Activated T-helper 1 cell treated with anti-CD3 and anti-CD28 coated beads, Interleukin-12 subunit alpha, Interleukin-12 subunit beta, Interleukin-2, Interleukin-4 antibody, amounts not matched to agents 30 ng/mL and 10 ng/mL and 1 ng/mL, durations not matched to agents 14 hours and 24 hours and 36 hours (primary cell): ENCODE measurements at regions of chr9 and their contacts with region 1.

Region 1: GRCh38 chr9:114691046-114691955 is 9.3 kb upstream of the TEX48 start:
- DNase-seq: peak; percentile 80
- H3K4me3 Mint-ChIP-seq: peak overlapping the region; percentile 69
- H3K27ac Mint-ChIP-seq: peak overlapping the region; percentile 98
- H3K4me1 Mint-ChIP-seq: peaks cover 93% of the 10 kb centered on the region
- H3K27me3 Mint-ChIP-seq: no peaks in the 10 kb centered on the region

Region 2: DNA sequence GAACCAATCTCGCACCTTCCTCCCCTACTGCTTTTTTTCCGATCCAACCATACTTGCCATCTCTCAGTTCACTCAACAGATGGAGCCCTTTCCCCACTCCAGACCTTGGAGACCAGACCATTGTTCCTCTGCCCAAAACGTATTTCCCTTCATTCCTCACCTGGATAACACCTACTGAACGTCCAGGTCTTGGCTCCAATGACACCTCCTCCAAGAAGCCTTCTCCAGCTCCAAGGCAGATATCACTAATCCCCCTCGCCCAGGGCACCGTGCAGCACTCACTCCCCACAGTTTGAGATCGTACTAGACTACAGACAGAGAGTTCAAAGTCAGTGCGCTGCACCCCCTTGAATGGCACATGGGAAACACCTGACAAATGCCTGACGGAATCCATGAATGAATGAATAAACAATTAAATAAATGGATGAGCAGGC is 256.4 kb before region 1 on chr9:
- intact Hi-C with region 1: no loop called
- DNase-seq: no peak
- H3K4me3 Mint-ChIP-seq: no peak overlapping the region
- H3K27ac Mint-ChIP-seq: no peak overlapping the region
- H3K4me1 Mint-ChIP-seq: peaks cover 5% of the 10 kb centered on the region
- H3K27me3 Mint-ChIP-seq: peaks cover 5% of the 10 kb centered on the region

Region 3: DNA sequence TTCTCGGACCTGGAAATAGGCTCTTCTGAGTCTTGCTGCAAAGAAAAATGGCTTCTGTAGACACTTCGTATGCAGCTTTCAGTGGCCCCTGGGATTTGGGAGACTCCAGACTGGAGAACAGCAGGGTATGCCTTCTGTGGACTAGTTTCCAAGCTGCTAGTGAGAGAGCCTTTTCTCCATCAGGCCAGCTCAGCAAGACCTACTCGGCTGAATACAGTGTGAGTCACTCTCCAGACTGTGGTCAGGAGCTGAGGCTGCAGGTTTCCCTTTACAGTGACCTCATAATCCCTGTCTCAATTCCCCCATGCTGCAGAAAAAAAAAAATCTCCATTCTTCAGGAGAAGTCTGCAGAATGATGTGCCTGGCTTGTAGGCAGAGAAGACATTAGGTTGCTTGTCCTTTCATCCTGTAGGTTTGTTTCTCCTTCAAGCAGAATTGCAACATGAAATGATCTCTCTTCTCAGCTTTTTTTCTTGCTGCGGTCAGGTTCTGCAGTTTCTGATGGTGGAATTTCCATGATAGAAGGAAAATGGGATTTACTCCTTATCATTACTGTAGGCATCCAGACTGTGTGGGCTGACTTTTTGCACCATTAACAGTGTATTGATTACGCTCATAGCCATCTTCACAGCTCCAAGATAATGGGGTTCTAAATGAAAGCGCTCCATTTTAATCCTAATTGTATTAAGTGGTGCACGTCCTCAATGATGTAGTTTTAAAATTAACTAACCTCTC is 317.4 kb after region 1 on chr9:
- intact Hi-C with region 1: loop called (anchors 1 kb)
- DNase-seq: peak; percentile 23
- H3K4me3 Mint-ChIP-seq: no peak overlapping the region
- H3K27ac Mint-ChIP-seq: no peak overlapping the region
- H3K4me1 Mint-ChIP-seq: peaks cover 97% of the 10 kb centered on the region
- H3K27me3 Mint-ChIP-seq: no peaks in the 10 kb centered on the region